ENCODE measurements at regions of chr10 and their contacts with region 1.

Region 1: GRCh38 chr10:110081911-110082310 is 74.1 kb downstream of the ADD3 start:
- DNase-seq: peak; percentile 97
- H3K4me3 ChIP-seq: no peak overlapping the region
- H3K27ac ChIP-seq: peak overlapping the region; percentile 90
- H3K4me1 ChIP-seq: peaks cover 41% of the 10 kb centered on the region
- H3K27me3 ChIP-seq: no peaks in the 10 kb centered on the region
- CTCF ChIP-seq: no peak
- POLR2A ChIP-seq: peak; percentile 70

Region 2: GRCh38 chr10:110016039-110016438 is 65.9 kb before region 1 on chr10:
- CTCF ChIA-PET with region 1: no interaction called
- POLR2A ChIA-PET with region 1: no interaction called
- dilution Hi-C with region 1: no loop called
- intact Hi-C with region 1: no loop called
- DNase-seq: peak; percentile 45
- H3K4me3 ChIP-seq: no peak overlapping the region
- H3K27ac ChIP-seq: no peak overlapping the region
- H3K4me1 ChIP-seq: no peaks in the 10 kb centered on the region
- H3K27me3 ChIP-seq: no peaks in the 10 kb centered on the region
- CTCF ChIP-seq: peak in 1 of 2 donors; percentile 5
- POLR2A ChIP-seq: no peak

Region 3: GRCh38 chr10:110035070-110035921 is 46.6 kb before region 1 on chr10:
- CTCF ChIA-PET with region 1: no interaction called
- POLR2A ChIA-PET with region 1: no interaction called
- dilution Hi-C with region 1: no loop called
- intact Hi-C with region 1: loop called (anchors 1 kb)
- DNase-seq: no peak
- H3K4me3 ChIP-seq: no peak overlapping the region
- H3K27ac ChIP-seq: no peak overlapping the region
- H3K4me1 ChIP-seq: peaks cover 21% of the 10 kb centered on the region
- H3K27me3 ChIP-seq: no peaks in the 10 kb centered on the region
- CTCF ChIP-seq: no peak
- POLR2A ChIP-seq: no peak

Region 4: GRCh38 chr10:110210674-110211464 is 129.0 kb after region 1 on chr10:
- CTCF ChIA-PET with region 1: interaction called, 3 read pairs
- POLR2A ChIA-PET with region 1: no interaction called
- dilution Hi-C with region 1: no loop called
- intact Hi-C with region 1: loop called (anchors 1 kb)
- DNase-seq: peak; percentile 99
- H3K4me3 ChIP-seq: peak overlapping the region; percentile 48 to 68 (median 57)
- H3K27ac ChIP-seq: no peak overlapping the region
- H3K4me1 ChIP-seq: peaks cover 4% of the 10 kb centered on the region
- H3K27me3 ChIP-seq: peaks cover 21 to 29% of the 10 kb centered on the region in 2 experiments
- CTCF ChIP-seq: no peak
- POLR2A ChIP-seq: no peak

Region 5: GRCh38 chr10:110512461-110513187 is 430.7 kb after region 1 on chr10:
- CTCF ChIA-PET with region 1: no interaction called
- POLR2A ChIA-PET with region 1: no interaction called
- dilution Hi-C with region 1: no loop called
- intact Hi-C with region 1: loop called (anchors 5 kb)
- DNase-seq: peak; percentile 70
- H3K4me3 ChIP-seq: no peak overlapping the region
- H3K27ac ChIP-seq: peak overlapping the region; percentile 94
- H3K4me1 ChIP-seq: peaks cover 39% of the 10 kb centered on the region
- H3K27me3 ChIP-seq: no peaks in the 10 kb centered on the region
- CTCF ChIP-seq: no peak
- POLR2A ChIP-seq: no peak

Measured in endothelial cell of umbilical vein (primary cell).